CD8-positive, alpha-beta T cell (primary cell): ENCODE measurements at regions of chr5 and their contacts with region 1.

Region 1: DNA sequence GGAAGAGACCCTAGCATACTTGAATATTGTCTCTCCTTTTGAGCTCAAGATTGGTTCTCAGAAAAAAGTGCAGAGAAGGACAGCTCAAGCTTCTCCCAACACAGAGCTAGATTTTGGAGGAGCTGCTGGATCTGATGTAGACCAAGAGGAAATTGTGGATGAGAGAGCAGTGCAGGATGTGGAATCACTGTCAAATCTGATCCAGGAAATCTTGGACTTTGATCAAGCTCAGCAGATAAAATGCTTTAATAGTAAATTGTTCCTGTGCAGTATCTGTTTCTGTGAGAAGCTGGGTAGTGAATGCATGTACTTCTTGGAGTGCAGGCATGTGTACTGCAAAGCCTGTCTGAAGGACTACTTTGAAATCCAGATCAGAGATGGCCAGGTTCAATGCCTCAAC is 9.5 kb downstream of the RNF14 start:
- DNase-seq: no peak
- ATAC-seq: no peak
- H3K4me3 ChIP-seq: no peak overlapping the region
- H3K4me3 Mint-ChIP-seq: no peak overlapping the region
- H3K27ac ChIP-seq: no peak overlapping the region
- H3K27ac Mint-ChIP-seq: no peak overlapping the region
- H3K4me1 ChIP-seq: no peaks in the 10 kb centered on the region
- H3K4me1 Mint-ChIP-seq: peaks cover 22% of the 10 kb centered on the region
- H3K27me3 ChIP-seq: no peaks in the 10 kb centered on the region
- H3K27me3 Mint-ChIP-seq: no peaks in the 10 kb centered on the region
- CTCF ChIP-seq: no peak

Region 2: DNA sequence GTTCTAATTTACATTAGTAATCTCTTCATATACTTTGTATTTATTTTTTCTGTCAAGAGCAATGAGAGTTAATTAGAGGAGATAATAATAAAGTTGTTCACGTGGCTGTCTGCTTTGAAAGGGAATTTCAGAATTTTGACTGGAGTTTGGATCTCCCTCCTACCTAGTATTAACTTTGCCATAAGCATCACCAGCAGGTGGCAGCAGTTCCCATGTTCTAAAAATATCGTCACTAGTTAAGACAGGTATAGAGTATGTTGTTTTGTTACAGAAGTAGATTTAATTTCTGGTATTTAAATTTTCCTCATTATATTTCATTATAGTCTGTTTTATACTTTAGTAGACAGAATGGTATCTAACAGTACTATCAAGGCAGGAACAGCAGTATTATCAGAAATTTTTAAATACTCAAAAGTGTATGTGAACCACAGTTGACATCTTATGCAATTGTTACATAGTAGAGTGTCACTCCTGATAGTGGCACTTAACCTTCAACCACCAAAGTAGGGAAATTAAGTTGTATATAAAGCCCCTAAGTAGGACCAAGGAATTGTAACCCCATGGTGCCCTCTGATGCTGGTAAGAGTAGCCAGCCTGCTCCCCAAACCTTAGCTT is 14.1 kb after region 1 on chr5:
- CTCF ChIA-PET with region 1: interaction called, 13 read pairs
- POLR2A ChIA-PET with region 1: interaction called, 4 read pairs
- intact Hi-C with region 1: no loop called
- DNase-seq: peak; percentile 59 to 87 (median 81)
- ATAC-seq: peak; percentile 87
- H3K4me3 ChIP-seq: no peak overlapping the region
- H3K4me3 Mint-ChIP-seq: no peak overlapping the region
- H3K27ac ChIP-seq: no peak overlapping the region
- H3K27ac Mint-ChIP-seq: no peak overlapping the region
- H3K4me1 ChIP-seq: no peaks in the 10 kb centered on the region
- H3K4me1 Mint-ChIP-seq: peaks cover 5% of the 10 kb centered on the region
- H3K27me3 ChIP-seq: no peaks in the 10 kb centered on the region
- H3K27me3 Mint-ChIP-seq: no peaks in the 10 kb centered on the region
- CTCF ChIP-seq: peak; percentile 97